Sigmoid colon (tissue), 7 donors: ENCODE measurements at regions of chr19 and their contacts with region 1.

Region 1: GRCh38 chr19:37719111-37719926 is at the start of gene ZNF607:
- DNase-seq: peak; percentile 92
- H3K4me3 ChIP-seq: peak within 1 kb of the TSS; percentile 78 to 97 (median 94)
- H3K27ac ChIP-seq: peak within 1 kb of the TSS; percentile 84 to 92 (median 87)
- H3K4me1 ChIP-seq: peaks cover 0 to 15% (median 11%) of the 10 kb centered on the region in 4 donors
- H3K27me3 ChIP-seq: no peaks in the 10 kb centered on the region
- CTCF ChIP-seq: peak; percentile 23 to 55 (median 50)
- EP300 ChIP-seq: no peak
- POLR2A ChIP-seq: peak; percentile 38 to 60
- total RNA-seq, gene ZNF607: 3.7 to 7.2 (median 4.8) TPM

Region 2: DNA sequence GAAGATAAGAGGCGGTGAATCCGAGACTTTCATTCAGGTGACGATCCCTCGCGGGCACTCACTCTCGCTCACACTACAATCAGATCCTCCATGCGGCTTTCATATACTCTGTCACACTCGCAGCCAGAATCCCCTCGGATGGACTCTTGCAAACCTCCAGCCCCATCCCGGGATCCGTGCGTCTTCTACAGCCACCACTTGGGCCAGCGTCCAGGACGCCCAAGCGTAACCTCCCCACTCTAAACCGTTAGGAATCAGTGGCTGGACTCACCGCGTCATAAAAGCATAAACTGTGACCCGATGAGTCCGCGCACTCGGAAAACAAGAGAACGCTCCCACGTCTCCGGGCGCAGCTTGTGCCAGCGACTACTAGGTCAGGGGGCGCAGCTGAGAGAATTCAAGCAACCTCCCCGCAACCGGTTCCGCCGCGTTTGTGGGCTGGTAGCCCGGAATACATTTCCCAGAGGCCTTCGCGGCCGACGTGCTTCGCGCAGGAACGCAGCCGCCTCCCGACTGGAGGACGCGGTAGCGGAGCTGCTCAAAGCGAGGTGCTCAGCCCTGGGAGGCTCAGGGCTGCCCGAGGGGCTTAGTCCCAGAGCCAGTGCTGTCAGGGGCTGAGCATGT is 27.3 kb before region 1 on chr19:
- intact Hi-C with region 1: loop called (anchors 2 kb)
- DNase-seq: peak; percentile 90
- H3K4me3 ChIP-seq: peak overlapping the region; percentile 59 to 63 (median 62)
- H3K27ac ChIP-seq: peak overlapping the region; percentile 82 to 88 (median 85)
- H3K4me1 ChIP-seq: peaks cover 0 to 9% (median 6%) of the 10 kb centered on the region in 4 donors
- H3K27me3 ChIP-seq: no peaks in the 10 kb centered on the region
- CTCF ChIP-seq: no peak
- EP300 ChIP-seq: no peak
- POLR2A ChIP-seq: peak in 1 of 2 donors; percentile 32